Activated naive CD4-positive, alpha-beta T cell treated with anti-CD3 and anti-CD28 coated beads for 36 hours (primary cell): ENCODE measurements at regions of chr6 and their contacts with region 1.

Region 1: GRCh38 chr6:29752451-29753308 is 29.4 kb downstream of the HLA-F start:
- DNase-seq: peak; percentile 92
- H3K4me3 Mint-ChIP-seq: peak overlapping the region; percentile 86
- H3K27ac Mint-ChIP-seq: peak overlapping the region; percentile 76
- H3K4me1 Mint-ChIP-seq: peaks cover 20% of the 10 kb centered on the region
- H3K27me3 Mint-ChIP-seq: peaks cover 2% of the 10 kb centered on the region

Region 2: GRCh38 chr6:29564875-29565274 is 187.8 kb before region 1 on chr6:
- CTCF ChIA-PET with region 1: no interaction called
- intact Hi-C with region 1: no loop called
- DNase-seq: no peak
- H3K4me3 Mint-ChIP-seq: no peak overlapping the region
- H3K27ac Mint-ChIP-seq: no peak overlapping the region
- H3K4me1 Mint-ChIP-seq: peaks cover 11% of the 10 kb centered on the region
- H3K27me3 Mint-ChIP-seq: peaks cover 34% of the 10 kb centered on the region

Region 3: GRCh38 chr6:29705389-29706231 is 47.1 kb before region 1 on chr6:
- CTCF ChIA-PET with region 1: interaction called, 9 read pairs
- intact Hi-C with region 1: loop called (anchors 1 kb)
- DNase-seq: no peak
- H3K4me3 Mint-ChIP-seq: no peak overlapping the region
- H3K27ac Mint-ChIP-seq: no peak overlapping the region
- H3K4me1 Mint-ChIP-seq: peaks cover 48% of the 10 kb centered on the region
- H3K27me3 Mint-ChIP-seq: peaks cover 12% of the 10 kb centered on the region

Region 4: DNA sequence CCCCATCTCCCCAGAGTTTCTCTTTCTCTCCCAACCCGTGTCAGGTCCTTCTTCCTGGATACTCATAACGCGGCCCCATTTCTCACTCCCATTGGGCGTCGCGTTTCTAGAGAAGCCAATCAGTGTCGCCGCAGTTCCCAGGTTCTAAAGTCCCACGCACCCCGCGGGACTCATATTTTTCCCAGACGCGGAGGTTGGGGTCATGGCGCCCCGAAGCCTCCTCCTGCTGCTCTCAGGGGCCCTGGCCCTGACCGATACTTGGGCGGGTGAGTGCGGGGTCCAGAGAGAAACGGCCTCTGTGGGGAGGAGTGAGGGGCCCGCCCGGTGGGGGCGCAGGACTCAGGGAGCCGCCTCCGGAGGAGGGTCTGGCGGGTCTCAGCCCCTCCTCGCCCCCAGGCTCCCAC is 29.4 kb before region 1 on chr6 and contains the start of gene HLA-F:
- CTCF ChIA-PET with region 1: interaction called, 3 read pairs
- intact Hi-C with region 1: loop called (anchors 1 kb)
- DNase-seq: peak; percentile 93
- H3K4me3 Mint-ChIP-seq: peak within 1 kb of the TSS; percentile 90
- H3K27ac Mint-ChIP-seq: peak within 1 kb of the TSS; percentile 97
- H3K4me1 Mint-ChIP-seq: peaks cover 55% of the 10 kb centered on the region
- H3K27me3 Mint-ChIP-seq: no peaks in the 10 kb centered on the region
- total RNA-seq, gene HLA-F: 282 to 310 TPM

Region 5: GRCh38 chr6:29737707-29738630 is 14.7 kb before region 1 on chr6:
- CTCF ChIA-PET with region 1: interaction called, 17 read pairs
- intact Hi-C with region 1: loop called (anchors 1 kb)
- DNase-seq: peak; percentile 85
- H3K4me3 Mint-ChIP-seq: no peak overlapping the region
- H3K27ac Mint-ChIP-seq: no peak overlapping the region
- H3K4me1 Mint-ChIP-seq: peaks cover 11% of the 10 kb centered on the region
- H3K27me3 Mint-ChIP-seq: no peaks in the 10 kb centered on the region

Region 6: DNA sequence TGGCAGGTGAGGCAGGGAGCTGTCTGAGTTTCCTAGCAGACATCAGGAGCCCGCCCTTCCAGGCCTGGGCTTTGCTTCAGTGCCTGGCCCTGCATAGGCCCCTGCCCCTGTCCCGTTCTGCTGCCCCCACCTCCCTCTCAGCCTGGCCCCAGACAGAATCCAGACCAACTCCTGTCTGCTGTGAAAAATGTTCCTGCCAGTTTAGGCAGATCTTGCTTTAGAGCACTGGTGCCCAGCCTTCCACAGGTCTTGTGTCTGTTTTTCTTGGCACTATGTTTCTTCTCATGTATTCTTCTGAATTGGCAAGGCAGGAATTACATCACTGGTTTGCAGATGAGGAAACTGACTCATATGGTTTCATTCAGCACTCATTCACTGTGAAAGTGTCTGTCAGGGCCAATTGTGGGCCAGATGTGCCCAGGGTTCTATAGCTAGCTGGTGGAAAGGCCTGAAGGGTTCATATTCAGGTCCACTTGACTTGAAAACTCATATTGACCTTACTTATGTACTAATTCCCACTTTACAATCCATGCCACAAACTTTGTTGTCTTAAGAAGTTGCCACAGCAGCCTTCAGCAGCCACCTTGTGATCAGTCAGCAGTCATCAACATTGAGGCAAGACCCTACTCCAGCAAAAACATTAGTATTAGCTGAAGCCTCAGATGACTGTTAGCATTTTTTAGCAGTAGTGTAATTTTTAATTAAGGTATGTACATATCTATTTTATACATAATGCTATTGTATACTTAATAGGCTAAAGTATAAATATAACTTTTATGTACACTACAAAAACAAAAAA is 11.0 kb after region 1 on chr6:
- CTCF ChIA-PET with region 1: interaction called, 19 read pairs
- intact Hi-C with region 1: loop called (anchors 1 kb)
- DNase-seq: peak; percentile 61
- H3K4me3 Mint-ChIP-seq: no peak overlapping the region
- H3K27ac Mint-ChIP-seq: peak overlapping the region; percentile 6
- H3K4me1 Mint-ChIP-seq: peaks cover 13% of the 10 kb centered on the region
- H3K27me3 Mint-ChIP-seq: no peaks in the 10 kb centered on the region

Region 7: DNA sequence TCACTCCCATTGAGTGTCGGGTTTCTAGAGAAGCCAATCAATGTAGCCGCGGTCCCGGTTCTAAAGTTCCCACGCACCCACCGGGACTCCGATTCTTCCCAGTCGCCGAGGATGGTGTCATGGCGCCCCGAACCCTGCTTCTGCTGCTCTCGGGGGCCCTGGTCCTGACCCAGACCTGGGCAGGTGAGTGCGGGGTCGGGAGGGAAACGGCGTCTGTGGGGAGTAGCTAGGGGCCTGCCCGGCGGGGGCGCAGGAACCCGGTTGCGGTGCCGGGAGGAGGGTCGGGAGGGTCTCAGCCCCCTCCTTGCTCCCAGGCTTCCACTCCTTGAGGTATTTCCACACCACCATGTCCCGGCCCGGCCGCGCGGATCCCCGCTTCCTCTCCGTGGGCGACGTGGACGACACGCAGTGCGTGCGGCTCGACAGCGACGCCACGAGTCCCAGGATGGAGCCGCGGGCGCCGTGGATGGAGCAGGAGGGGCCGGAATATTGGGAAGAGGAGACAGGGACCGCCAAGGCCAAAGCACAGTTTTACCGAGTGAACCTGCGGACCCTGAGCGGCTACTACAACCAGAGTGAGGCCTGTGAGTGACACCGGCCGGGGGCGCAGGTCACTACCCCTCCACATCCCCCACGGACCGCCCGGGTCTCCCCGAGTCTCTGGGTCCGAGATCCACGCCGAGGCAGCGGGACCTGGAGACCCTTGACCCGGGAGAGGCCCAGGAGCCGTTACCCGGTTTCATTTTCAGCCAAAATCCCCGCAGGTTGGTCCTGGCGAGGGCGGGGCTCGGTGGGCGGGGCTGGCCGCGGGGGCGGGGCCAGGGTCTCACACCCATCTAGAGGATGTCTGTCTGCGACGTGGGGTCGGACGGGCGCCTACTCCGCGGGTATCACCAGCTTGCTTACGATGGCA is 39.7 kb after region 1 on chr6:
- CTCF ChIA-PET with region 1: interaction called, 4 read pairs
- intact Hi-C with region 1: loop called (anchors 2 kb)
- DNase-seq: peak; percentile 82
- H3K4me3 Mint-ChIP-seq: peak overlapping the region; percentile 77
- H3K27ac Mint-ChIP-seq: no peak overlapping the region
- H3K4me1 Mint-ChIP-seq: peaks cover 12% of the 10 kb centered on the region
- H3K27me3 Mint-ChIP-seq: peaks cover 14% of the 10 kb centered on the region

Region 8: GRCh38 chr6:29834564-29835436 is 82.1 kb after region 1 on chr6:
- CTCF ChIA-PET with region 1: interaction called, 5 read pairs
- intact Hi-C with region 1: loop called (anchors 5 kb)
- DNase-seq: peak; percentile 67
- H3K4me3 Mint-ChIP-seq: no peak overlapping the region
- H3K27ac Mint-ChIP-seq: no peak overlapping the region
- H3K4me1 Mint-ChIP-seq: peaks cover 5% of the 10 kb centered on the region
- H3K27me3 Mint-ChIP-seq: peaks cover 49% of the 10 kb centered on the region